GM10248 (cell line): ENCODE measurements at regions of chr4 and their contacts with region 1.

Region 1: DNA sequence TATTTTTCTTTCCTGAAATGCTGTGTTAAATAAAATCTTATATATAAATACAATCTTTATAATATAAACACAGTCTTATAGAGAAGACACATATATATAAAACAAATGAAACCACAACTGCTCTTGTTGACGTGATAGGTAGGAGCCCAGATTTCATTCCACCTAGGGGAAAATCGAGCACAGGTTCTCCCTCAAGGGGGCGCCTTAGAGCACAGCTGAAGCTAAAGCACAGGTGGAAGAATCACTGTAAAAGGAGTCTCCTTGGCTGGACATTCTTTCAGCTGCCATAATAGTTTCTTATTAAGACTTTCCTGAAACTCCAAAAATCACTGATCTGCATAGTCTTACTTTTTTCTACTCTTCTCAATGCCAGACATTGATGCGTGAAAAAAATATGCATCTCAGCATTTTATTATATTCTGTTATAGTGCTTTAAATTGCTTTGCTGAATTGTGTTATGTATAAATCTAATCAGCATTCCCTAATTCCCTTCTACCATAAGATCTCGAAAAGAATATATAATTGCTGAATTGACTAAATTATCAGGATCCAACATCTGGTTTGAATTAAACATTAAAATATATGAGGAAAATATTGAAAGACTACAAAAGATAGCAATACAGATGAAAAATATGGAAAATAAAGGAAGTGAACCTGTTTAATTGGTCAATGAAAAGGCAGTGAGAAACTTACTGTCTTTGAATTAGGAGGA is 25.5 kb upstream of the RXFP1 start:
- DNase-seq: peak; percentile 38
- CTCF ChIP-seq: peak; percentile 47

Region 2: DNA sequence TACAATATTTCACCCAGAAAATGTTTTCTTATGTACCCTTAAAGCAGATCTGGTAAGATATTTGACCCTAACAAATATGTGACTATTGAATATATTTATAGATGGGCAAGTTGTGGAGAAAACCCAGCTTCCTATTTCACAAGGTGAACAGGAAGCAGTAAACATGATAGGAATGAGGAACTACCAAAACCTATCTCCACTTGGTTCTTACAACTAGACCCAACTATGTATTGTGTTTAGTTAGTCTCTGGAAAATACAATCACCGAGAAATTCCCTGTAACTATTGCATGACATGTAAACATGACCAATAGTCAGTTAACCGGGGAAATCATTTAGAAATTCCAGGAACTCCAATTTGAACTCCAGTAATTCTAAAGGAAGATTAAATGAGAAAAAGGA is 17.1 kb after region 1 on chr4:
- CTCF ChIA-PET with region 1: interaction called, 13 read pairs
- POLR2A ChIA-PET with region 1: no interaction called
- DNase-seq: no peak
- CTCF ChIP-seq: no peak